Mammary epithelial cell (primary cell): ENCODE measurements at regions of chr3 and their contacts with region 1.

Region 1: DNA sequence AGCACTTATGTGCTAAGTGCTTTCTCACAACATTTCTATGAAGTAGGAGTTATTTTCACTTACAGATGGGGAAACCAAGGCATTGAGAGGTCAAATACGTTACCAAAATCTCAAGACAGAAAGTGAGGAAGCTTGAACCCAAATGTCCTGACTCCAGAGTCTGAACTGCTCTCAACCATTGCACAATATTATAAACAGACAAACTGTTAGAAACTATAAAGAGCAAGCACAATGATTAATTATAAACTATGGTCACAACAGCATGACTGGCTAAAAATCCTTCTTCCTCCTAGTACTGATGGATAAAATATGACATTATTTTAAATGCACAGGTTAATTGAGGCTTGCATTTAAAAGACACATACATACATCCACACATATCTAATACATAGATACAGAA is 77.9 kb upstream of the ASB14 start:
- DNase-seq: no peak
- H3K4me3 ChIP-seq: no peak overlapping the region
- H3K27ac ChIP-seq: no peak overlapping the region
- H3K4me1 ChIP-seq: no peaks in the 10 kb centered on the region
- H3K27me3 ChIP-seq: no peaks in the 10 kb centered on the region
- CTCF ChIP-seq: no peak

Region 2: GRCh38 chr3:56775838-56776555 is 594.3 kb before region 1 on chr3:
- CTCF ChIA-PET with region 1: no interaction called
- dilution Hi-C with region 1: loop called (anchors 10 kb)
- in situ Hi-C with region 1: no loop called
- intact Hi-C with region 1: no loop called
- DNase-seq: no peak
- H3K4me3 ChIP-seq: no peak overlapping the region
- H3K27ac ChIP-seq: no peak overlapping the region
- H3K4me1 ChIP-seq: peaks cover 7% of the 10 kb centered on the region
- H3K27me3 ChIP-seq: no peaks in the 10 kb centered on the region
- CTCF ChIP-seq: no peak

Region 3: GRCh38 chr3:57331078-57331610 is 39.2 kb before region 1 on chr3:
- CTCF ChIA-PET with region 1: no interaction called
- dilution Hi-C with region 1: no loop called
- in situ Hi-C with region 1: no loop called
- intact Hi-C with region 1: no loop called
- DNase-seq: no peak
- H3K4me3 ChIP-seq: no peak overlapping the region
- H3K27ac ChIP-seq: no peak overlapping the region
- H3K4me1 ChIP-seq: no peaks in the 10 kb centered on the region
- H3K27me3 ChIP-seq: peaks cover 4% of the 10 kb centered on the region
- CTCF ChIP-seq: no peak

Region 4: GRCh38 chr3:58049143-58049785 is 678.9 kb after region 1 on chr3:
- CTCF ChIA-PET with region 1: no interaction called
- dilution Hi-C with region 1: no loop called
- in situ Hi-C with region 1: no loop called
- intact Hi-C with region 1: no loop called
- DNase-seq: peak; percentile 97
- H3K4me3 ChIP-seq: no peak overlapping the region
- H3K27ac ChIP-seq: peak overlapping the region; percentile 89
- H3K4me1 ChIP-seq: peaks cover 71% of the 10 kb centered on the region
- H3K27me3 ChIP-seq: no peaks in the 10 kb centered on the region
- CTCF ChIP-seq: no peak